Activated CD4-positive, alpha-beta T cell treated with anti-CD3 and anti-CD28 coated beads, Interleukin-2, amount 10 ng/mL, durations not matched to agents 24 days and 14 days (primary cell): ENCODE measurements at regions of chr3 and their contacts with region 1.

Region 1: DNA sequence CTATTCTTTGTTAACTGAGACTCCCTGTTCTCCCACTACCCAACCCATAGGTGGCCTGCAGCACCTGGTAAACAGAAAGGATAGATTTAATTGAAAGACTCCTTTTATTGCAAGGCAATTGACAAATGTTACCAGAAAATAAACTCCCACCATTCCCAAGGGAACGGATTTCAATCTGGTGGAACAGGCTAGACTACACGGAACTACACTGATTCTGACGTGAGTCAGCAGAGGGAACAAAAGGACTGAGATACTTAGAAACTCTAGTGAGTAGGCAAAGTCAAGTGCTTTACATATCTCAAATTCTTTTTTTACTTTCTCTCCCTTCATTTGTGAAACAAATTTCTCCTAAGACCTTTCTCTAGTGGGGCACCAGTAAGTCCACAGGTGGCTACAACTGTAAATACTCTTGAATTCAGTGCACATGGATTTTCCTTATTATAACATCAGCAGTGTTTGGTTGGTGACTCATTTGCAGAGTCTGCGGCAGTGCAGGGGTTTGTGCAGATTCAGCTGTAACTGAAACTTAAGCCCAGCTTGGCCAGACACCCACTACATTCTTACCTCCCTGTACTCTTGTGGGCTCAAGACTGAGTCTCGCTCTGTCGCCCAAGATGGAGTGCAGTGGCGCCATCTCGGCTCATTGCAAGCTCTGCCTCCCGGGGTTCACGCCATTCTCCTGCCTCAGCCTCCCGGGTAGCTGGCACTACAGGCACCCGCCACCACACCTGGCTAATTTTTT is 34.3 kb upstream of the PLSCR2 start:
- DNase-seq: no peak
- H3K4me3 Mint-ChIP-seq: no peak overlapping the region
- H3K27ac Mint-ChIP-seq: no peak overlapping the region
- H3K4me1 Mint-ChIP-seq: peaks cover 40% of the 10 kb centered on the region
- H3K27me3 Mint-ChIP-seq: no peaks in the 10 kb centered on the region

Region 2: GRCh38 chr3:146350852-146351251 is 152.8 kb before region 1 on chr3:
- intact Hi-C with region 1: no loop called
- DNase-seq: no peak
- H3K4me3 Mint-ChIP-seq: no peak overlapping the region
- H3K27ac Mint-ChIP-seq: no peak overlapping the region
- H3K4me1 Mint-ChIP-seq: no peaks in the 10 kb centered on the region
- H3K27me3 Mint-ChIP-seq: no peaks in the 10 kb centered on the region

Region 3: GRCh38 chr3:146469150-146470017 is 34.2 kb before region 1 on chr3 and contains the start of gene PLSCR2:
- intact Hi-C with region 1: loop called (anchors 5 kb)
- DNase-seq: peak; percentile 90
- H3K4me3 Mint-ChIP-seq: peak within 1 kb of the TSS; percentile 78
- H3K27ac Mint-ChIP-seq: peak within 1 kb of the TSS; percentile 76
- H3K4me1 Mint-ChIP-seq: peaks cover 4% of the 10 kb centered on the region
- H3K27me3 Mint-ChIP-seq: peaks cover 5% of the 10 kb centered on the region
- total RNA-seq, gene PLSCR2: not detected in 2 replicates

Region 4: DNA sequence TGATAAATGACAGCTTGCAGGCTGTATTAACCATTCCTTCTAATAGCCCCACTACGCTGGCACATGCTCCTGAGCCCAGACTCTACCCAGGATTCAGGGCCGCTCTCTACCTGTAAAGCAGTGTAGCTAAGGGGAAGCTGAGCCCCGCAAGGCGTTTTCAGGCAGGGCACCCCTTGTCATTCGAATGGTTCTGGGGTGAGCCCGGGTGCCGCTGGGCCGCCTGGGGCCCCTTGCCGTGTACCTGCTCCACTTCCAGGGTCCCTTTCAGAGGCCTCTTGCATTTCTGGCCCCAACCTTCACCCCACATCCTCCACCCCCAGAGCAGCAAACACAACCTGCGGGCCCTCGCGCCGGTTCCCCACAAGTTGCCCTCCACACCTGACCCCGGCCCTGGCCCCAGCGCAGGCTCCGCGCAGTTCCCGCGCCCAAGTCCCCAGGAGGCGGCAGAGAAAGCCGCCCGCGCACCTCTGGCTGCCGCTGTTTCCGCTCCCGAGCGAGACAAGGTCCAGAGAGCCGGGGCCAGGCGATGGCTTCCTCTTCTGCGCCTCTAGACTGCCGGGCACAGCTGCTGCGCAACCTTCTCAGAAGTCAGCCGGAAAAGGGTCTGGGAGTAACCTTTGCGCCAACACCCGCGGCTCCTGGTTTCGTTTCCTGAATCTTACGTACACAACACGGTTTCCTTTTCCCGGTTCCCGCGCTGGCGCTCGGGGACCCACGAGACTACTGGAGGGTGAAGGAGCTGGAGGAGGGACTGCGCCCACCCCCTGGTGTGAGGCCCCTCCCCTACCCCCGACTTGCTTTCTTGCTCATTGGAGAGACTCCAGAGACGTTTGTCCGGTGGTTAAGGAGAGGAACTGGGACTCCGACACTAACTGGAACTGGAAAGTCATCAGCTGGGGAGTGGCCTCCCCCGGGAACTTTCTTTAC is 40.6 kb after region 1 on chr3 and contains the start of gene PLSCR1:
- intact Hi-C with region 1: loop called (anchors 5 kb)
- DNase-seq: peak; percentile 96
- H3K4me3 Mint-ChIP-seq: peak within 1 kb of the TSS; percentile 98
- H3K27ac Mint-ChIP-seq: peak within 1 kb of the TSS; percentile 94
- H3K4me1 Mint-ChIP-seq: peaks cover 68% of the 10 kb centered on the region
- H3K27me3 Mint-ChIP-seq: no peaks in the 10 kb centered on the region
- total RNA-seq, gene PLSCR1: 84.2 and 86.0 TPM in 2 replicates

Region 5: GRCh38 chr3:146550743-146551510 is 47.3 kb after region 1 on chr3:
- intact Hi-C with region 1: loop called (anchors 2 kb)
- DNase-seq: peak; percentile 71
- H3K4me3 Mint-ChIP-seq: peak overlapping the region; percentile 75
- H3K27ac Mint-ChIP-seq: peak overlapping the region; percentile 52
- H3K4me1 Mint-ChIP-seq: peaks cover 68% of the 10 kb centered on the region
- H3K27me3 Mint-ChIP-seq: peaks cover 1% of the 10 kb centered on the region